Activated CD8-positive, alpha-beta memory T cell treated with anti-CD3 and anti-CD28 coated beads, Interleukin-2, amount 10 ng/mL, durations not matched to agents 7 days and 5 days (primary cell): ENCODE measurements at regions of chr5 and their contacts with region 1.

Region 1: GRCh38 chr5:150778517-150779396 is at the start of gene SMIM3:
- DNase-seq: peak; percentile 83
- ATAC-seq: peak; percentile 66
- H3K4me3 Mint-ChIP-seq: peak within 1 kb of the TSS; percentile 99
- H3K27ac Mint-ChIP-seq: peak within 1 kb of the TSS; percentile 94
- H3K4me1 Mint-ChIP-seq: peaks cover 65% of the 10 kb centered on the region
- H3K27me3 Mint-ChIP-seq: no peaks in the 10 kb centered on the region
- total RNA-seq, gene SMIM3: 22.1 to 37.5 TPM

Region 2: DNA sequence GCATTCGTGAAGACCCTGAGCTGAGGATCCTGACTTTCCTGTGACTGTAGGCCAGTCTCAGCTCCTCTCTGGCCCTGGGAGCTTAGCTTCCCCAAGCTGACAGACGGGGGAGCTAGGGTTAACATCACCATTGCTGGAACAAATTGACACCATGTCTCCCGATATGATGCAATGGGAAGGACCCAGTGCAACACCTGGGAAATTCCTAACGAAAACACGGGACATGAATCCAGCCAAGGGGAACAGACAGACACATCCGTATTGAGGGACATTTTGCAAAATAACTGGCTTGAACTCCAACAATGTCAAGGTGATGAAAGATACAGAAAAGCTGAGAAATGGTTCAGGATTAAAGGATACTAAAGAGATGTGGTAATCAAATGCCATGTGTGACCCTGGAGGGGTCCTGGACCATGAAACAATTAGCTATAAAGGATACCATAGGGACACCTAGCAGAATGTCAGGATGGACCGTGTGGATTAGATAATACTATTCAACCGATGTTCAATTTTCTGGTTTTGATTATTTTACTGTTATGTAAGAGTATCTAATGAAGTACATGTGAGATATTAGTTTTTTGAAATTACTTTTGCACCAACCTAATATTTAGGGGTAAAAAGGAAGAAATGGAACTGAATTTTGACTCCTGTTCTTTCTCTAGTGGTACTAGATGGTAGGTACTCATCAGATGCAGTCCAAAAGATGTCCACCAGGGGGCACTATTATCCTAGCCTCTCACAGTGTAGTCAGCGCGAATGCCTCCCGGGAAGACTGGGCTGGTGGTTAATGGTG is 218.2 kb before region 1 on chr5:
- CTCF ChIA-PET with region 1: interaction called, 30 read pairs
- DNase-seq: peak; percentile 90
- ATAC-seq: peak; percentile 92
- H3K4me3 Mint-ChIP-seq: no peak overlapping the region
- H3K27ac Mint-ChIP-seq: no peak overlapping the region
- H3K4me1 Mint-ChIP-seq: no peaks in the 10 kb centered on the region
- H3K27me3 Mint-ChIP-seq: peaks cover 3% of the 10 kb centered on the region

Region 3: GRCh38 chr5:150734579-150735384 is 44.0 kb before region 1 on chr5:
- CTCF ChIA-PET with region 1: interaction called, 18 read pairs
- DNase-seq: peak; percentile 69
- ATAC-seq: peak; percentile 70
- H3K4me3 Mint-ChIP-seq: peak overlapping the region; percentile 5
- H3K27ac Mint-ChIP-seq: peak overlapping the region; percentile 57
- H3K4me1 Mint-ChIP-seq: peaks cover 59% of the 10 kb centered on the region
- H3K27me3 Mint-ChIP-seq: no peaks in the 10 kb centered on the region

Region 4: GRCh38 chr5:150758531-150759333 is 20.0 kb before region 1 on chr5 and contains the start of gene DCTN4:
- CTCF ChIA-PET with region 1: interaction called, 16 read pairs
- DNase-seq: peak; percentile 96
- ATAC-seq: peak; percentile 97
- H3K4me3 Mint-ChIP-seq: no peak within 1 kb of the TSS
- H3K27ac Mint-ChIP-seq: no peak within 1 kb of the TSS
- H3K4me1 Mint-ChIP-seq: peaks cover 23% of the 10 kb centered on the region
- H3K27me3 Mint-ChIP-seq: no peaks in the 10 kb centered on the region
- total RNA-seq, gene DCTN4: 41.9 to 46.1 TPM

Region 5: GRCh38 chr5:150789943-150790611 is 11.3 kb after region 1 on chr5:
- CTCF ChIA-PET with region 1: interaction called, 23 read pairs
- DNase-seq: peak; percentile 85
- ATAC-seq: peak; percentile 100
- H3K4me3 Mint-ChIP-seq: peak overlapping the region; percentile 61
- H3K27ac Mint-ChIP-seq: peak overlapping the region; percentile 81
- H3K4me1 Mint-ChIP-seq: peaks cover 51% of the 10 kb centered on the region
- H3K27me3 Mint-ChIP-seq: no peaks in the 10 kb centered on the region

Region 6: DNA sequence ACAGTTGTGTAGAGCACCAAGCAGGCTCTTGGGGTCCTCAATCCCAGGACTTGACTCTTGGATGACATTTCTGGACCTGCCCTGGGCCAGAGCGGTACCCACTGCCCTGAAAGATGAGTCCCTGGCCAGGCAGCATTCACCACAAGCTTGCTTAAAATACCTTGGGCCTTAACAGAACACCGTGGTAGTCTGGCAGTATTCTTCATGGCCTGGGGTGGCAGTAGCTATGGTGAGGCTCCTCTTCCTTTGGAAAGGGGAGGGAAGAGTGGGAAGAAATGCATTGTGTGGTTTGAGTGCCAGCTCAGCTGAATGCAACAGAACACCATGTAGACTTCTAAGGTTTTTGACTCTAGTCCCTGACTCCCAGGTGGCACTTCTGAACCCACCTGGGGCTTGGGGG is 38.2 kb after region 1 on chr5:
- CTCF ChIA-PET with region 1: no interaction called
- DNase-seq: no peak
- ATAC-seq: no peak
- H3K4me3 Mint-ChIP-seq: no peak overlapping the region
- H3K27ac Mint-ChIP-seq: no peak overlapping the region
- H3K4me1 Mint-ChIP-seq: peaks cover 2% of the 10 kb centered on the region
- H3K27me3 Mint-ChIP-seq: peaks cover 13% of the 10 kb centered on the region

Region 7: GRCh38 chr5:150862070-150862469 is 83.3 kb after region 1 on chr5:
- CTCF ChIA-PET with region 1: no interaction called
- DNase-seq: no peak
- ATAC-seq: no peak
- H3K4me3 Mint-ChIP-seq: no peak overlapping the region
- H3K27ac Mint-ChIP-seq: no peak overlapping the region
- H3K4me1 Mint-ChIP-seq: no peaks in the 10 kb centered on the region
- H3K27me3 Mint-ChIP-seq: no peaks in the 10 kb centered on the region

Region 8: GRCh38 chr5:151328734-151329133 is 550.0 kb after region 1 on chr5:
- CTCF ChIA-PET with region 1: no interaction called
- DNase-seq: no peak
- ATAC-seq: no peak
- H3K4me3 Mint-ChIP-seq: no peak overlapping the region
- H3K27ac Mint-ChIP-seq: no peak overlapping the region
- H3K4me1 Mint-ChIP-seq: no peaks in the 10 kb centered on the region
- H3K27me3 Mint-ChIP-seq: peaks cover 8% of the 10 kb centered on the region